SK-N-SH (cell line): ENCODE measurements at regions of chr12 and their contacts with region 1.

Region 1: GRCh38 chr12:21697904-21698630 is 40.4 kb upstream of the LDHB start:
- DNase-seq: peak; percentile 22
- H3K4me3 ChIP-seq: no peak overlapping the region; a peak in 2 of 4 replicates
- H3K27ac ChIP-seq: no peak overlapping the region
- H3K4me1 ChIP-seq: no peaks in the 10 kb centered on the region; a peak in 1 of 4 replicates
- H3K27me3 ChIP-seq: peaks cover 8% of the 10 kb centered on the region; the same call in 1 of the 2 replicates
- CTCF ChIP-seq: peak; percentile 82
- EP300 ChIP-seq: no peak
- RAD21 ChIP-seq: peak; percentile 79

Region 2: DNA sequence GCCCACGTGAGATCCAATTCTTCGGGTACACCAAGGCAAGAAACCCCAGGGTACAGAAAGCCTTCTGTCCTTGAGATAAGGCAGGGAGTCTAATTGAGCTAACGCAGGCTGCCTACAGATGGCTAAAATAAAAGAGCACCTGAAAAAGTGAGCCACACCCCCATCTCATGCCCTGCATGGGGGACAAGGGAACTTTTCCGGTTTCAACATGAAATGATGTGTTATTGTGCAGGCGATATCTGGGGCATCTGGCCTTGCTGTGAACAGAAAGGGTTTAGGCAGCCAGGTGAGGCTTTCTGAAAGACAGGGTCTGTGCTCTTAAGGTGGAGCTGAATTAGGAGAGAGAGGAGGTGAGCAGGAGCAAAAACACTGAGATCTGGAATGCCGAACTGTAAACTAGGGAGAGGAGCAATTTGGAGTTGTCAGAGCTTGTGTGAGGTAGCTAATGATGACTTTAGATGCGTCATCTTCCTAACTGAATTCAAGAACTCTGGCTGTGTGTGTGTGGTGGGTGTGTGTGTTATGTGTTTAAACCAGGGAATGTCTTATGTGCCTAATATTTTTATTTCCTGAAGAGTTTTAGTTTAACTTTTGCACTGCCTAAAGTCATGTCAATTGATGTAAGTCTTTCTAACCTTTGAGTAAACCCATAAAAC is 20.3 kb before region 1 on chr12:
- CTCF ChIA-PET with region 1: interaction called, 22 read pairs
- POLR2A ChIA-PET with region 1: no interaction called
- DNase-seq: no peak
- H3K4me3 ChIP-seq: no peak overlapping the region
- H3K27ac ChIP-seq: no peak overlapping the region
- H3K4me1 ChIP-seq: no peaks in the 10 kb centered on the region
- H3K27me3 ChIP-seq: peaks cover 17% of the 10 kb centered on the region; the same call in 1 of the 2 replicates
- CTCF ChIP-seq: no peak
- EP300 ChIP-seq: no peak
- RAD21 ChIP-seq: no peak

Region 3: DNA sequence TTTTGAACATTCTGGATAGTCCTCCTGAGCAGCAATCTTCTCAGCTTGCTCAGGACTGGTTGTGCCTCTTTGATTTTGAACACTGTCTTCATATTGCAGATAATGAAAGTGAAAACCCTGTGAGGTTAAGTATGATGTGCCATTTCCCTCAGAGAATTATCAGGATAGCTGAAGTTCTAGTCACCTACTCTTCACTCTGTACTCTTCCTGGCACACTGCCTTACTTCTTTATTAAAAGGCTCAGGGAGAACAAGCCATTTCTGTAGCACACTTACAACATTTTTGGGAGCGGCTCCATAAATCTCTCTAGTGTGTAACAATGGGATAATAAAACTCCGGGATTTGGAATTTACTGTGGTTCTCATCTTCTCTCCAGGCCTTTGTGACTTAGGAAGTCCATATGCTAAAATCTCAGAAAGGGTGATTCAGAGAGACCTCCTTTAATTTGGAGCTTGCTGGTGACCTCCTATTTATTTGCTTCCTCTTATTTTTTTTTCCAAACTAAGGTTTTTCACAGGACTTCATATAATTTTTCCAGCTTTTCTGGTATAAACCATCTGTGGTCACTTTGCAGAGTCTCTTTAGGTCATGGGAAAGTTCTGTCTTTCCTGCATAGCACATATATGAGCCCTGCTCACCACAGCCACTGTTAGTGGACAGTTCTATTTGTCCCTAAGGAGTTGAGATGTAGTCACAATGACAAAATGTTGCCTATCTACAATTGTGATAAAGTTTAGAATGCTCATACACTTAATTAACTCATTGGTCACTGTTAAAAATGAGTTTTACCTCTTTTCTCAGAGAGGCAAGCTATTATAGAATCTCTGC is 13.1 kb after region 1 on chr12:
- CTCF ChIA-PET with region 1: interaction called, 17 read pairs
- POLR2A ChIA-PET with region 1: no interaction called
- DNase-seq: no peak
- H3K4me3 ChIP-seq: no peak overlapping the region
- H3K27ac ChIP-seq: no peak overlapping the region
- H3K4me1 ChIP-seq: no peaks in the 10 kb centered on the region
- H3K27me3 ChIP-seq: no peaks in the 10 kb centered on the region; the same call in 1 of the 2 replicates
- CTCF ChIP-seq: no peak
- EP300 ChIP-seq: no peak
- RAD21 ChIP-seq: no peak

Region 4: DNA sequence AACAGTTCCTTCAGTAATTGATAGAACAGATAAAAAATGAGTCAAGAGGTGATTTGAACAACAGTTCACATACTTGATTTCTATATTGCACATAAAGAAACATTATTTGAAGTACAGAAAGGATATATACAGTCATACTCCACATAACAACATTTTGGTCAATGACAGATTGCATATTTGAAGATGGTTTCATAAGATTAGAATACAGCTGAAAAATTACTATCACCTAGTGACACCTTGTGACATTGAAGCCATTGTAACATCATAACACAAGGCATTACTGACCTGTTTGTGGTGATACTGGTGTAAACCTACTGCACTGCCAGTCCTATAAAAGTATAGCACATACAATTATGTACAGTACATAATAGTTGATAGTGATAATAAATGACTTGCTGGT is 286.3 kb after region 1 on chr12:
- CTCF ChIA-PET with region 1: interaction called, 143 read pairs
- POLR2A ChIA-PET with region 1: no interaction called
- DNase-seq: no peak
- H3K4me3 ChIP-seq: no peak overlapping the region
- H3K27ac ChIP-seq: no peak overlapping the region
- H3K4me1 ChIP-seq: no peaks in the 10 kb centered on the region
- H3K27me3 ChIP-seq: peaks cover 8% of the 10 kb centered on the region; the same call in 1 of the 2 replicates
- CTCF ChIP-seq: no peak
- EP300 ChIP-seq: no peak
- RAD21 ChIP-seq: no peak

Region 5: GRCh38 chr12:22018860-22019259 is 320.8 kb after region 1 on chr12:
- CTCF ChIA-PET with region 1: interaction called, 43 read pairs
- POLR2A ChIA-PET with region 1: no interaction called
- DNase-seq: no peak
- H3K4me3 ChIP-seq: no peak overlapping the region
- H3K27ac ChIP-seq: no peak overlapping the region
- H3K4me1 ChIP-seq: no peaks in the 10 kb centered on the region; a peak in 1 of 4 replicates
- H3K27me3 ChIP-seq: no peaks in the 10 kb centered on the region
- CTCF ChIP-seq: peak; percentile 59
- EP300 ChIP-seq: no peak
- RAD21 ChIP-seq: peak; percentile 47; the same call in 1 of the 2 replicates